T-cell (primary cell): ENCODE measurements at regions of chr7 and their contacts with region 1.

Region 1: DNA sequence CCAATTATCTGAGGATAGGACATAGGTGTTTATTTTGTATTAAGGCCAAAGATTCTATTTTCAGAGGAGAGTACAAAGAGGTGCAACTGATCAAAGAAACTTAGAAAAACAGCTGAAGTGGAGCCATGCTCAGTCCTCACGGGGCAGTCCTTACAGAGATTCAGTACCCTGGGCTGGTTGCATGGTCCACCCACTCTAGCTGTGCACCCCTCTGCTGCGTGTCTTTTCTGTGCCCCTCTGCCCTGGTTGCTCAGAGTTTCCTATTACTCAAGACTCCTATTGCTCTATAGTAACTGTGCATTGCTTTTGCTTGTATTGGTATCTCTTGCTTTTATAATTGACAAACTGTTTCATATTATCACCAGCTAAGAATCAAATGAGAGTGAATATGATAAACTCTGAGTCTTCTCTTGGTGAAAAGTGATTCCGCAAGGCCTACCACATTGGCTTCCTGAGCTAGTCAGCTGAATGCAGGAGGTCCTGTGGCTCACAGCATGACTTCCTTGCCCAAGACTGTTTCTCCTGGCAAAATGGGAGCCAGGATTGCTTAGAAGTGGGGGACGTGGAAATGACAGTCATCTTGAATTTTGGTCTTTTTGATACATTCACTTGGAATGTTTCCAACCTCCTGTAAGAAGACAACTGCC is 137.0 kb downstream of the GLCCI1 start:
- DNase-seq: peak in 1 of 35 experiments; percentile 21
- ATAC-seq: peak in 2 of 4 experiments; percentile 43 to 72
- H3K4me3 ChIP-seq: no peak overlapping the region
- H3K4me3 Mint-ChIP-seq: peak overlapping the region in 1 of 3 donors; percentile 48
- H3K27ac ChIP-seq: peak overlapping the region; percentile 25
- H3K27ac Mint-ChIP-seq: peak overlapping the region; percentile 86 to 90
- H3K4me1 ChIP-seq: peaks cover 0 to 16% of the 10 kb centered on the region in 2 experiments
- H3K4me1 Mint-ChIP-seq: peaks cover 29 to 34% (median 30%) of the 10 kb centered on the region in 3 donors
- H3K27me3 ChIP-seq: no peaks in the 10 kb centered on the region
- H3K27me3 Mint-ChIP-seq: no peaks in the 10 kb centered on the region

Region 2: GRCh38 chr7:7630626-7631329 is 474.8 kb before region 1 on chr7:
- CTCF ChIA-PET with region 1: no interaction called
- POLR2A ChIA-PET with region 1: no interaction called
- DNase-seq: no peak
- ATAC-seq: no peak
- H3K4me3 ChIP-seq: no peak overlapping the region
- H3K4me3 Mint-ChIP-seq: no peak overlapping the region
- H3K27ac ChIP-seq: no peak overlapping the region
- H3K27ac Mint-ChIP-seq: no peak overlapping the region
- H3K4me1 ChIP-seq: no peaks in the 10 kb centered on the region
- H3K4me1 Mint-ChIP-seq: no peaks in the 10 kb centered on the region
- H3K27me3 ChIP-seq: no peaks in the 10 kb centered on the region
- H3K27me3 Mint-ChIP-seq: peaks cover 0 to 2% of the 10 kb centered on the region in 2 donors

Region 3: GRCh38 chr7:7739204-7740036 is 366.2 kb before region 1 on chr7:
- CTCF ChIA-PET with region 1: interaction called in 1 of 2 experiments, 12 read pairs
- POLR2A ChIA-PET with region 1: no interaction called
- DNase-seq: no peak
- ATAC-seq: no peak
- H3K4me3 ChIP-seq: no peak overlapping the region
- H3K4me3 Mint-ChIP-seq: no peak overlapping the region
- H3K27ac ChIP-seq: no peak overlapping the region
- H3K27ac Mint-ChIP-seq: no peak overlapping the region
- H3K4me1 ChIP-seq: peaks cover 0 to 3% of the 10 kb centered on the region in 2 experiments
- H3K4me1 Mint-ChIP-seq: peaks cover 5 to 25% (median 17%) of the 10 kb centered on the region in 3 donors
- H3K27me3 ChIP-seq: no peaks in the 10 kb centered on the region
- H3K27me3 Mint-ChIP-seq: no peaks in the 10 kb centered on the region

Region 4: DNA sequence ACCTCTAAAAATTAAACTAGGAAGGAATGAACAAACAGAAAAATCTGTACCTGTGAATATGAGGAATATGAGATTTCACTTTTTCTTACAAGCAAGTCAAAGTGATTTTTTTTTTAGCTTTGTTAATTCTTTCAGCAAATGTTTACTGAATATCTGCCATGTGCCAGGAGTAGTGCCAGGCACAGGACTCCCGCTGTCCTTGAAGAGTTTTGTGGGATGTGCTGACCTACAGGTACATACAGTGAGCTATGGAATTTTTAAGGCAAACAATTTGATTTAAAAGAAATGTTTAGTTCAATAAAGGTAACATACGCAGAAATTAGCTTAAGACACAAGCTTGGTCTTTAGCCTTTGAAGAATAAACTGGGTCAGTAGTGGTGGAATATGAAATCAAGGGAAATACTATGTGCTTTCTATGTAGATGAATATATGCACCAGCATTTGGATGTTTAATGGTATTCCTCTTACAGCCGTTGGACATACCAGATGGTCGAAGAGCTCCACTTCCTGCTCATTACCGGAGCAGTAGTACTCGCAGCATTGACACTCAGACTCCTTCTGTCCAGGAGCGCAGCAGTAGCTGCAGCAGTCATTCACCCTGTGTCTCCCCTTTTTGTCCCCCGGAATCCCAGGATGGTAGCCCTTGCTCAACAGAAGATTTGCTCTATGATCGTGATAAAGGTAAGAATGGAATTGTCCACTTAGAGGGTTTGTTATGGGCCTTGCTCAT is 35.0 kb before region 1 on chr7:
- CTCF ChIA-PET with region 1: no interaction called
- POLR2A ChIA-PET with region 1: no interaction called
- DNase-seq: no peak
- ATAC-seq: no peak
- H3K4me3 ChIP-seq: no peak overlapping the region
- H3K4me3 Mint-ChIP-seq: no peak overlapping the region
- H3K27ac ChIP-seq: no peak overlapping the region
- H3K27ac Mint-ChIP-seq: no peak overlapping the region
- H3K4me1 ChIP-seq: peaks cover 0 to 7% of the 10 kb centered on the region in 2 experiments
- H3K4me1 Mint-ChIP-seq: peaks cover 41 to 53% (median 44%) of the 10 kb centered on the region in 3 donors
- H3K27me3 ChIP-seq: no peaks in the 10 kb centered on the region
- H3K27me3 Mint-ChIP-seq: no peaks in the 10 kb centered on the region

Region 5: DNA sequence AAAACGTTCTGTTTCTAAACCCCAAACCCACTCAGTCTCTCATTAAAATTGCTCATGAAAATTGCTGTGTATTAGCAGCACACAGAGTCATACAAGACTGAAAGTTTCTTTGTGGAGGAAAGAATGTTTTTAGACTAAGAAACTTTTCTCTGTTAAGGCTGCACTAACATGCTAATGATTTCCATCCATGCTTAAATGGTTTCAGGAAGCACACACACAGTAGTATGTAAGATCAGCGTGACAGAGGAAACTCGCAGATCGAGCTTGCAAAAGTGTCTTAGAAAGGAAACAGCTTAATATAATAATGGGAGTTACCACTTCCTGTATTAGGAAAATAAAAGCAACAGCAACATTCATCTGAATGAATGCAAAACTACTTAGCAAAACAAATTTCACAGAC is 43.6 kb after region 1 on chr7:
- CTCF ChIA-PET with region 1: no interaction called
- POLR2A ChIA-PET with region 1: no interaction called
- DNase-seq: peak in 1 of 35 experiments; percentile 43
- ATAC-seq: peak; percentile 27 to 69 (median 58)
- H3K4me3 ChIP-seq: no peak overlapping the region
- H3K4me3 Mint-ChIP-seq: peak overlapping the region in 2 of 3 donors; percentile 1 to 31
- H3K27ac ChIP-seq: peak overlapping the region; percentile 27
- H3K27ac Mint-ChIP-seq: peak overlapping the region; percentile 84
- H3K4me1 ChIP-seq: peaks cover 18 to 20% of the 10 kb centered on the region in 2 experiments
- H3K4me1 Mint-ChIP-seq: peaks cover 52 to 69% (median 53%) of the 10 kb centered on the region in 3 donors
- H3K27me3 ChIP-seq: no peaks in the 10 kb centered on the region
- H3K27me3 Mint-ChIP-seq: no peaks in the 10 kb centered on the region